Activated T-helper 1 cell treated with anti-CD3 and anti-CD28 coated beads, Interleukin-12 subunit alpha, Interleukin-12 subunit beta, Interleukin-2, Interleukin-4 antibody, amounts not matched to agents 30 ng/mL and 10 ng/mL and 1 ng/mL, durations not matched to agents 14 hours and 24 hours and 36 hours (primary cell): ENCODE measurements at regions of chr4 and their contacts with region 1.

Region 1: DNA sequence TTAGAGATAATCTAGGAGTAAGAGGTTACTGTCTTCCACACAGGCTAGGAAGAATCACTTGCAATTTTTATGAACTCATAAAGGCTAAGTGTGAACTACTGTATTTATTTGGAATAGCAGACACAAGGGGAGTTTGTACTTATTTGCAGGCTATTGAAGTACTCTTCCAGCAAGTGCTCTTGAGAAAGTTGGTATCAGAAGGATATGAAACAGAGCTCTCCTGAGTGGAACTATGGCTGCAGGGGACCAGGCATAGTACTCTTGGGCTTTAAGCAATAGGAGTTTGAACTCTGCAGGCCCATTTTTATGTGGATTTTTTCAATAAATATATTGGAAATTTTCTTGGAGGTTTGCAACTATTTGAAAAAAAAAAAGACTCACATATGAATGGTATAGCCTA is 756.3 kb upstream of the ATOH1 start:
- DNase-seq: no peak
- H3K4me3 Mint-ChIP-seq: no peak overlapping the region
- H3K27ac Mint-ChIP-seq: no peak overlapping the region
- H3K4me1 Mint-ChIP-seq: no peaks in the 10 kb centered on the region
- H3K27me3 Mint-ChIP-seq: no peaks in the 10 kb centered on the region

Region 2: DNA sequence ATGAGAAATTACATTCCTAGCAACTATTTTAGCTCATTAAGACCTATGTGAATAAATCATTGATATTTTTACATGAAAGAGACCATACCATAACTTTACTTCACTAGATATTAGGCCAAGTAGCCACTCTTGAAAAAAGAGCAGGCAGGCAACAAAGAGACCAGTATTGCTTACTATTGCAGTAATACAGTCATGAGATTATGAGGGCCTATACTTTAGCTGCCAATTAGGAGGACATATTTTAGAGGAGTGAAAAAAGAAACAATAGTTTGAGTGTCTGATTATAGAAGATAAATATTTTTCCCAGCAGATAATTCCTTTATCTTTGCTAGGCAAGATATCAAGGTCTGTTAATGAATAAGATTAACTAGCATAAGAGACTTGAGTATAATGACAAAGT is 29.5 kb before region 1 on chr4:
- intact Hi-C with region 1: no loop called
- DNase-seq: no peak
- H3K4me3 Mint-ChIP-seq: no peak overlapping the region
- H3K27ac Mint-ChIP-seq: no peak overlapping the region
- H3K4me1 Mint-ChIP-seq: no peaks in the 10 kb centered on the region
- H3K27me3 Mint-ChIP-seq: no peaks in the 10 kb centered on the region

Region 3: DNA sequence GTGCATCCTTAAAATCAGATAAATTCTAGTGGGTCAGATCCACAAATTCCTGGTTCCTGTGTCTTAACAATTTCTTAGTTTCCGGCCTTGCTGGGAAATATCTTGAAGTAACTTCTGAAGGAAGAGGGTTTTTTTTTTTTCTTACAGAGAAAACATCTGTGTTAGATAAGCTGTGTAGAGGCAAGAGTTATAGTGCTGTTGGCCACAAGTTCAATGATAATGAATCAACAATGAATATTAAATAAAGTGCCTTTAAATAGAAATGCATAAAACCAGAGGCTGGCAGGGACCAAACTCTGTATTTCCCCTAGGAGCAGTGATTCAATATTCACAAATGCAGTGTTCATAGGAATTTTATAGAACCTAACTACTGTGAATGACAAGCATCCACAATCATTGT is 44.3 kb after region 1 on chr4:
- intact Hi-C with region 1: loop called (anchors 5 kb)
- DNase-seq: no peak
- H3K4me3 Mint-ChIP-seq: no peak overlapping the region
- H3K27ac Mint-ChIP-seq: no peak overlapping the region
- H3K4me1 Mint-ChIP-seq: no peaks in the 10 kb centered on the region
- H3K27me3 Mint-ChIP-seq: no peaks in the 10 kb centered on the region